Right ventricle myocardium inferior (tissue), 1 donor: ENCODE measurements at regions of chr14 and their contacts with region 1.

Region 1: DNA sequence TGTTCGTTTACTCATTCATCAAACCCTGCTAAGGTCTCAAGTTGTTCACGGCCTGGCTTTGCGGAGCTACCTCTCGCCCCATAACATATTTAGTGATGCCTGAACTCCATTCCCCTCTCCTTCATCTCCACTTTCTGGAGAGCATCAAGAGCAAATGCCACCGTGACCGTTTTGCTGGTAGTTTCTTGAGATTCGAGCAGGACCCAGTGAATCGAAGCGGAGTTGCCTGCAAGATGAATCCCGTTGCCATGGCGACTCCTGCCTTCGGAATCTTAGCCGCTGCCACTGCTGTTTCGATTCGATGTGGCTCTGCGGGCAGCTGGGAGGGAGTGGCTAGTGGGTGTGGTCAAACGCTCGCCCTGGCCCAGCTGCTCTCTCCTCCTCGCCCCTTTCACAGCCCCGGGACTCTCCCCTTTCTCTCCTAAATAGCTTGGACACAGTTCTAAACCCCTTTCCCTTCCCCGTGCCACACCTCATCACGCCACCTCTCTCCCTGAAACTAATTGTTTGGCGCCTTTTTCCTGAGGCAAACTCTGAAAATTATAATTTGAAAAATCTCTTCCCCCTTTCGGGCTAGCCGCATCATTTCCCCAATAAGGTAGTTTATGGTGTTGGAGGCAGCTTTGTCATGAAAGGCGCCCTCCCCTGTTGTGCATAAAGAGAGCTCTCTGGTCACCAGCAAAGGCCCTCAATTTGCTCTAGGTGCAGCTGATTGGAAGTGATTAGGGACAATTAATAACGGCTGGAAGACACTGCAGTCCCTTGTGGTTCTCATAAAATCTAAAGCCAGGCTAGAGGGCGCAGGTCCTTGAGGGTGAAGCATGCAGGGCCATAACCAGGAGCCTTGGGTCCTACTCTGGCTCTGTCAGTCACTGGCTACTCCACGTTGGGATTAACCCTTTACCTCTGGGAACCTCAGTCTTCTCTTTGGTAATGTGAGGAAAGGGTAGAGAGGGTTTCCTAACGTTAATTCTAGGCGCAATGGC is 1.6 kb downstream of the DAAM1 start:
- DNase-seq: peak; percentile 93
- ATAC-seq: peak; percentile 45

Region 2: GRCh38 chr14:58919217-58919616 is 270.9 kb before region 1 on chr14:
- intact Hi-C with region 1: no loop called
- DNase-seq: no peak
- ATAC-seq: no peak

Region 3: DNA sequence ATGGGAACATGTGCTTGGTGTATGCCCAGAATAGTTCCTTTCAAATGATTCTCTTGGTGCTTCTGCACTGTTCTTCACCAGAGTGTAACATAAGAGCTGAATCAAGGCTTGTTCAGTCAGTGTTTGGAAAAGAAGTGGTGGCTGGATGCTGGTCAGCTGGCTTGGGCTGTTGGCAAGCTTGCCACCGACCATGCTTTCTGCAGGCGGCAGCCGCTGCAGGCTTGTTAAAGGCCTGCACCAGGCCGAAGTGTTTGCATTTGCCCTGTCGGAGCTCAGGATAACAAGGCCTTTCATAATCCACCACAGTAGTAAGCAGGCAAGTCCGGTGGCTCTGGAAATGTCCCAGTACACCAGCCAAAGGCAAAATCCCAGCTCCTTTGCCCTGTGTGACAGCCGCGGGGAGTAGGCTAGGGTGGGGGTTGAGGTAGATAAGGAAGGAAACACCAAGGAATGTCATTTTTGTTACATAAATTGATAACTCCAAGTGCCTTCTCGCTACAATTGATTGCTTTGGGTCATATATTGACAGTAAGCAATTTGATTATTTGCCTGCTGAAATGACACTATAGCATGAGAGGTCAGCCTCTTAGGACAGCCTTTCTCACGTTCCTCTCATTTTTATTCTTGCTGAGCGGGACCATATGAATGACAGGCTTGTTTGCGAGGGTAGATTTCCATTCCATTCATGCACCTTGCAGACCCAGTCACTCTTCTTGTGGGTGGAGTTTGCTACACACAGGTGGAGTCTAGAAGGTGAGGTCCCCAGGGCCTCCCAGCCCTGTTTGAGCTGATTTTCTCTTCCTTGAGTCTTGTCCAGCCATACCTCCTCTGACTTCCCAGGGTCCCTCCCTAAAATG is 25.5 kb after region 1 on chr14:
- intact Hi-C with region 1: no loop called
- DNase-seq: peak; percentile 82
- ATAC-seq: peak; percentile 94

Region 4: DNA sequence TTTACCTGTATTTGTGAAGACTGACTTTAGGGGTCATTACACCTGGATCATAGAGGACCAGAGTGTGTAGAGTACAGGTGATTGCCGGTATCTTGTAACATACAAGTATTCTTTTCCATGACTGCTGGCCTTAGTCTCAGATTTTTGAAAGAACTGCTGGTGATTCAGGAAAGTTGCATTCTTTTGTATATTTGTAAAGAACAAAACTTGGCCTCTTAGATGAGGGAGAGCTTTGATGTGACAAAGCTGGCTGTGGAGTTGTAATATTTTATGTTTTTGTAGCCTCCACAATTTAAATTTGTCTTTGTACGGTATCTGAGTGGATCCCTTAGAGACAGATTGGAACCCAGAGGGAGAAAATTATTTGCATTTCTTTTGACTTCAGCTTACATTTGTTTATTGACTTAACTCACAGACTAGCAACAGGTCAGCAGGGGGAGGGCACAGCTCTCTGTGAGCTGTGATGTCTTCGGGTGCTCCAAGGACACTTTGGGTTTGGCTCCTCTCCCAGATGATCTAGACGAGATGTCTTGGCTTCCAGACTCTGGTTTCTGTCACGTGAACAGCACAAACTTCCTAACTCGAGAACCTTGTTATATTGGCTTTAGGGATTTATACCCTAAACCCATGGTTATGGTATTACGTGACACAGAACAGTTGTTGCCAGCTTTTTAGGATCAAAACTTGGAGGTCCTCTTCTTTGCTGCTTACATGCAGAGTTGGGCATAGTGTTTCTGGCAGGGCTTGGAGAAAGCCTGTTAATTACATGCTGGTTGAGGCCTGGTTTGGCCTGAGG is 64.3 kb after region 1 on chr14:
- intact Hi-C with region 1: loop called (anchors 1 kb)
- DNase-seq: peak; percentile 81
- ATAC-seq: peak; percentile 93

Region 5: GRCh38 chr14:59333668-59334067 is 143.6 kb after region 1 on chr14:
- intact Hi-C with region 1: loop called (anchors 5 kb)
- DNase-seq: no peak
- ATAC-seq: peak; percentile 94

Region 6: DNA sequence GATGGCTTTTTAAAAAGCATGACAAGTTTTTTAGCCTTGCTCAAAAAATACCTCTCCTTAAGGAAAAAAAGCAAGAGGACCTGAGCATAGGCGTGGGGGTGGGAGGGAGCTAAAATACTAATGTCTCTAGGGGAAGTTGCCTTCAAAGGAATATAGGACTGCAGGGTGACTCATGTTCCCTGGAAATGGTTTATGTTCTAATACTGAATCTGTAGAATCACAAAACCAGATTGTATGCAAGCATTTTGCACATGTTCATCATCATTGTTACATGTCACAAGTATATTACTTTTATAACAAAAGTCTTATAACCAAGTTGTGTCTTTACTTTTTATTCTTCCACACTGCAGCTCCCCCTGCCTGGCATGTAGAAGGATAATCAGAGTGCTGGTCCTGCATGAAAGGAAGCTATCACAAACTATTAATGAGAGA is 238.5 kb after region 1 on chr14:
- intact Hi-C with region 1: loop called (anchors 5 kb)
- DNase-seq: no peak
- ATAC-seq: no peak